K562 (cell line): ENCODE measurements at regions of chr17 and their contacts with region 1.

Region 1: GRCh38 chr17:28252436-28252835 is 66.6 kb upstream of the TMEM97 start:
- DNase-seq: no peak
- ATAC-seq: no peak
- H3K4me3 ChIP-seq: no peak overlapping the region
- H3K27ac ChIP-seq: no peak overlapping the region
- H3K4me1 ChIP-seq: peaks cover 0 to 28% of the 10 kb centered on the region in 2 experiments; a peak in 3 of 5 replicates
- H3K27me3 ChIP-seq: peaks cover 7 to 25% of the 10 kb centered on the region in 2 experiments; a peak in 3 of 5 replicates
- CTCF ChIP-seq: no peak
- EP300 ChIP-seq: no peak
- POLR2A ChIP-seq: no peak
- RAD21 ChIP-seq: no peak

Region 2: GRCh38 chr17:27578718-27579085 is 673.7 kb before region 1 on chr17:
- CTCF ChIA-PET with region 1: no interaction called
- POLR2A ChIA-PET with region 1: no interaction called
- in situ Hi-C with region 1: no loop called
- intact Hi-C with region 1: no loop called
- DNase-seq: peak; percentile 51 to 78 (median 56)
- ATAC-seq: no peak; the same call in 2 of the 3 replicates
- H3K4me3 ChIP-seq: no peak overlapping the region
- H3K27ac ChIP-seq: peak overlapping the region; percentile 92
- H3K4me1 ChIP-seq: peaks cover 45 to 68% of the 10 kb centered on the region in 2 experiments
- H3K27me3 ChIP-seq: no peaks in the 10 kb centered on the region
- CTCF ChIP-seq: 0 out of 6 replicates have a peak, but pooled peaks of 2 of the 3 experiments have one; percentile 26 to 32
- EP300 ChIP-seq: no peak
- POLR2A ChIP-seq: no peak
- RAD21 ChIP-seq: peak in 1 of 2 experiments; percentile 16; a peak in 1 of 4 replicates

Region 3: DNA sequence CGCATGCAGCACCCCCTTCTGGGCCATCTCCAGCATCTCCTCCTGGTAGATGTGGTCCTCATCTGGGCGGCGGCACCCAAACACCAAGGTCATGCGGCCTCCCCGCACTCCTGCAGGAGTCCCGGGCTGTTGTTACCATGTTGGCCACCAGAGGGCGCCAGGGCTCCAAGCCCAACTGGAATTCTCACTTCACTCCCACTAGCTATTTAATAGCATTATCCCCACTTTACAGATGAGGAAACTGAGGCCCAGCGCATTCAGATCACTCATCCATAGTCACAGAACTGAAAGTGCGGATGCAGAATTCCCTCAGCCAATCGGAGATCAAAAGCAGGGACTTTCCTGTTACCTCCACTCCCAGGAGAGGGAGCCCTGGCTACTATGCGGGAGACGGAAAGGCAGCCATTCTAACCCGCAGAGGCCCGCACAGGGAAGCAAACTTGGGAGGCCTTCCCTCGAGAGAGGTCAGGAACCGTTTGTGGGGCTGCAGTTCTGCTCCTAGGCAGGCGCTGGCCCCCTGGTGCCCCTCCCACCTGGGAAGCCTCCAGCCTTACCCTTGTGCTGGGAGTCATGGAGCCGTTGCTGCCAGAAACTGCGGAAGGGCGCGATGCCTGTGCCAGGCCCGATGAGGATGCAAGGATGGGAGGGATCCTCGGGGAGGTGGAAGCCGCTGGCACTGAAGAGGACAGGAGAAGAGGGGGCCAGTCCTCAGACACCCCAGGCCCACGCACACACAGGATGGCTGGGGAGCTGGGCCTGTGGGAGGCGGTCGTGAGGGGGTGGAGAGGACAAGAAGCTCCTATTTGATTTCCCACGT is 492.2 kb before region 1 on chr17:
- CTCF ChIA-PET with region 1: interaction called, 6 read pairs
- POLR2A ChIA-PET with region 1: no interaction called
- in situ Hi-C with region 1: no loop called
- intact Hi-C with region 1: loop called (anchors 5 kb)
- DNase-seq: peak; percentile 63 to 79 (median 70)
- ATAC-seq: peak; percentile 86
- H3K4me3 ChIP-seq: no peak overlapping the region
- H3K27ac ChIP-seq: no peak overlapping the region
- H3K4me1 ChIP-seq: peaks cover 0 to 11% of the 10 kb centered on the region in 2 experiments; a peak in 3 of 5 replicates
- H3K27me3 ChIP-seq: peaks cover 0 to 27% of the 10 kb centered on the region in 2 experiments; a peak in 3 of 5 replicates
- CTCF ChIP-seq: peak; percentile 82 to 95 (median 93)
- EP300 ChIP-seq: no peak
- POLR2A ChIP-seq: no peak
- RAD21 ChIP-seq: peak; percentile 81 to 89

Region 4: GRCh38 chr17:27879987-27880608 is 372.3 kb before region 1 on chr17:
- CTCF ChIA-PET with region 1: no interaction called
- POLR2A ChIA-PET with region 1: no interaction called
- in situ Hi-C with region 1: no loop called
- intact Hi-C with region 1: loop called (anchors 5 kb)
- DNase-seq: peak; percentile 78 to 85 (median 80)
- ATAC-seq: peak; percentile 98
- H3K4me3 ChIP-seq: no peak overlapping the region
- H3K27ac ChIP-seq: no peak overlapping the region
- H3K4me1 ChIP-seq: no peaks in the 10 kb centered on the region
- H3K27me3 ChIP-seq: peaks cover 21 to 40% of the 10 kb centered on the region in 2 experiments
- CTCF ChIP-seq: peak; percentile 90 to 95 (median 92)
- EP300 ChIP-seq: no peak
- POLR2A ChIP-seq: no peak
- RAD21 ChIP-seq: peak; percentile 87 to 92

Region 5: DNA sequence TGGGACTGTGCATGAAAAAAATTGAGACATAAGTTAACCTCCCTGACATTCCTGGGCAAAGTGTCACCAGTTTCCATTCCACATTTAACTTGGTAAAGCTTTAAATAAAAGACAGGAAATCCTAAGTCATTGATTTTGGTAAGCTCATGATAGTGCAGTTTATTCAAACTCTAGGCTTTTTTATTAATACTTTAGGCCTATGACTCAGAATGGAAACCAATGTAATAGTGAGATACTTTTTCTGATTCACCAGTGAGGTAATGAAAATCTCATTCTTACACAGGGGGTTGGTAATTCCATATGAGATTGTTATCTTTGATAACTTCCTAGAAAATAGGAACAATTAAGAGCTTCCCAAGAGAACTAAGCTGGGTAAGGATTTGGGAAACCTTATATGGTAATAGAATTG is 118.9 kb before region 1 on chr17:
- CTCF ChIA-PET with region 1: no interaction called
- POLR2A ChIA-PET with region 1: no interaction called
- in situ Hi-C with region 1: no loop called
- intact Hi-C with region 1: no loop called
- DNase-seq: no peak
- ATAC-seq: no peak
- H3K4me3 ChIP-seq: no peak overlapping the region
- H3K27ac ChIP-seq: no peak overlapping the region
- H3K4me1 ChIP-seq: no peaks in the 10 kb centered on the region
- H3K27me3 ChIP-seq: no peaks in the 10 kb centered on the region
- CTCF ChIP-seq: no peak
- EP300 ChIP-seq: no peak
- POLR2A ChIP-seq: no peak
- RAD21 ChIP-seq: no peak

Region 6: GRCh38 chr17:28426081-28426519 is 173.7 kb after region 1 on chr17:
- CTCF ChIA-PET with region 1: no interaction called
- POLR2A ChIA-PET with region 1: no interaction called
- in situ Hi-C with region 1: no loop called
- intact Hi-C with region 1: loop called (anchors 10 kb)
- DNase-seq: peak; percentile 51 to 63 (median 60)
- ATAC-seq: peak; percentile 99
- H3K4me3 ChIP-seq: no peak overlapping the region
- H3K27ac ChIP-seq: no peak overlapping the region
- H3K4me1 ChIP-seq: no peaks in the 10 kb centered on the region; a peak in 1 of 5 replicates
- H3K27me3 ChIP-seq: peaks cover 17 to 31% of the 10 kb centered on the region in 2 experiments
- CTCF ChIP-seq: peak; percentile 63 to 77 (median 72)
- EP300 ChIP-seq: no peak
- POLR2A ChIP-seq: no peak
- RAD21 ChIP-seq: peak in 1 of 2 experiments; percentile 52; a peak in 2 of 4 replicates